Activated CD4-positive, alpha-beta memory T cell treated with anti-CD3 and anti-CD28 coated beads for 36 hours (primary cell): ENCODE measurements at regions of chr9 and their contacts with region 1.

Region 1: GRCh38 chr9:70639853-70640814 is 225.7 kb upstream of the KLF9 start:
- DNase-seq: no peak
- H3K4me3 Mint-ChIP-seq: no peak overlapping the region
- H3K27ac Mint-ChIP-seq: no peak overlapping the region
- H3K4me1 Mint-ChIP-seq: no peaks in the 10 kb centered on the region
- H3K27me3 Mint-ChIP-seq: peaks cover 17% of the 10 kb centered on the region

Region 2: DNA sequence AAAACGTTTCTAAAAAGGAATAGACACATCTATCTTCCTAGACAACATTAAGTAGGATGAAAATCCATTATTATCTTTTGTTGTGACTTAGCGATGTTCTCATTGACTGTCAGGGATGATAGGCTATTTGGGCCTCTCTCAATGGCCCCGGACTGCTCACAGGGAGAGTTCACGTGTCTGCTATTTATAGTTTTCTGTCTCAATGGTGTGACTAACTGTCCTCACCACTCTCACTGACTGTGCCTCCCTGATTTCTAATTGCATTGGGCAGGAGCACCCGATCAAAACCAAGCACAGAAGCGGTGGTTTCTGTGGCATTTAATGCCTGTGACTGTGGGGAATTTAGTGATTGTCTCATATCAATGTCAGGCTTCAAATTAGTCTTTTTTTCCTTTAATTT is 61.0 kb after region 1 on chr9:
- CTCF ChIA-PET with region 1: no interaction called
- POLR2A ChIA-PET with region 1: no interaction called
- intact Hi-C with region 1: no loop called
- DNase-seq: no peak
- H3K4me3 Mint-ChIP-seq: no peak overlapping the region
- H3K27ac Mint-ChIP-seq: no peak overlapping the region
- H3K4me1 Mint-ChIP-seq: no peaks in the 10 kb centered on the region
- H3K27me3 Mint-ChIP-seq: no peaks in the 10 kb centered on the region

Region 3: DNA sequence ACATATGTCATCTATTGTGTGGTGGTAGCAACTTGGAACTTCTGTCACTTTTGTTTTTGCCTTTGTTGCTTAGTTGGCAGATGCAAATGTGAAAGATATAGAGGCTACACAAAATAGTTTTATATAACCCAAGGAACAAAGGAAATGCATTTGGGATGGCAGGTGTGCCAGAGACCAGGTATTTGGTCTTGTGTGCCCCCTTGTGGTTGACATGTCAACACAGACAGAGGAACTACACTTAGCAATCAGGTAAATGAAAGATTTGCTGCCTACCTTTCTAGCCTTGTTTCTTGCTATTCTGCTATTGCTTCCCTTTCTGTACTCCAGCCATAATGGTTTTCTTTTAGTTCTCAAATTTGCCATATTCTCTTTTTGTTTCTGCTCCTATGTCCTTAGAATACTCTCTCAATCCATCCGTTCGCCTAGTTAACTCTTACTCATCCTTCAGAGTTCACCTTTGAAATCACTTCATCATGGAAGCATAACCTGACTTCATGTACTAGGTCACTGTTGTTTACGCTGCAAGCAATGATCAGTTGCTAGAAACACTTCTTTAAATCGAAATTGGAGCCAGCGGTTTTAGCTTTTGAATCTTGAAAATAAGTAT is 361.7 kb after region 1 on chr9:
- CTCF ChIA-PET with region 1: interaction called, 5 read pairs
- POLR2A ChIA-PET with region 1: no interaction called
- intact Hi-C with region 1: loop called (anchors 2 kb)
- DNase-seq: no peak
- H3K4me3 Mint-ChIP-seq: no peak overlapping the region
- H3K27ac Mint-ChIP-seq: no peak overlapping the region
- H3K4me1 Mint-ChIP-seq: no peaks in the 10 kb centered on the region
- H3K27me3 Mint-ChIP-seq: no peaks in the 10 kb centered on the region

Region 4: DNA sequence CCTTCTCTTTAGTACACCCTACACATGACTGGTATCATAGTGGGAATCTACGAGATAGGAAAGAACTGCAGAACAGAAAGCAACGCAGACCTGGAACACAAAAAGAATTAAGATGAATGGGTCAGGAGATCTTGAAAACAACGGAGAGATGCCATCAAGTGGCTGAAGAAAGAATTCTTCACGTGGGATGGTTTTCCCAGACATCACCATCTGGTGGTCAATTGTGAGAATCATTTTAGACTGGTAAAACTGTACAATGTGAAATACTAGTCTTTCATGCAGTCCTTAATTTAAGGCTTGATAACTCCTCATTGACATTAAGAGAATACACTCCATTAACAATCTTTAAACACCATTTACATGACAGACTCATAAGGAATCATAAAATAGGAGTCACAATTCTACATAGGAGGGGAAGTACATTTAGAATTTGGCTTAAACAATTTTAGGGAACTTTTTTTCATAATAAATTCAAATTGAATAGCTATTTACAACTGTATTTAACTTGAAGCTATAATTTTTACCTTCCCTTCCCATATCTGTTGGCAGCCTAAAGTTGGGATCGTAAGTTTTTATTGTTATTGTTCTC is 609.7 kb after region 1 on chr9:
- CTCF ChIA-PET with region 1: interaction called, 15 read pairs
- POLR2A ChIA-PET with region 1: no interaction called
- intact Hi-C with region 1: loop called (anchors 5 kb)
- DNase-seq: no peak
- H3K4me3 Mint-ChIP-seq: no peak overlapping the region
- H3K27ac Mint-ChIP-seq: no peak overlapping the region
- H3K4me1 Mint-ChIP-seq: no peaks in the 10 kb centered on the region
- H3K27me3 Mint-ChIP-seq: peaks cover 1% of the 10 kb centered on the region